GM13976 (cell line): ENCODE measurements at regions of chr4 and their contacts with region 1.

Region 1: GRCh38 chr4:52983563-52984303 is 121.6 kb downstream of the RASL11B start:
- DNase-seq: peak; percentile 57
- CTCF ChIP-seq: peak; percentile 20

Region 2: DNA sequence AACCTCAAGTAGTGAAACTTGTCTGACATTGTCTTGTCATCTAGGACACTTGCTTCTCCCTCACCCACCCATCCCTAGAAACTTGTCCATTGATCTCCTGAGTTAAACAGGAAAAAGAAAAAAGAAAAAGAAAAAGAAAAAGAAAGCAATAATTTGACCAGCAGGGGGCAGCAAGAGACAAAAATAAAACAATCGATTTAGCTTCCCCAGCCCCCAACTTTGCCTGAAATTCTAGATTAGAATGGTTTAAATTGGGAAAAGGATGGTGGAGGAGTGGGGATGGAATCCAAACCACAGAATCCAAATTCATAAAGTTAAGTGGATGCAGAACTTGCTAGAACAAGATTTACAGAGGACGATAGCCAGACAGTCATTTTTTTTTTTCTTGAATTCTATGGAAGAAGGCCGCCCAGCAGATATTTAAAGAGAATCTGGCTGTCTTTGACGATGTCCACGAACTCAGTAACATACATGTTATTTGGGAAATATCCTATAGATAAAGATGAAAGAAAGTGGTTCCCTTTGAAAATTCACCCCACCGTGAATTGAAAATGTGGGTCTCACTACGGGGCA is 607.5 kb before region 1 on chr4:
- in situ Hi-C with region 1: loop called (anchors 10 kb)
- DNase-seq: peak; percentile 34
- CTCF ChIP-seq: peak; percentile 12

Region 3: DNA sequence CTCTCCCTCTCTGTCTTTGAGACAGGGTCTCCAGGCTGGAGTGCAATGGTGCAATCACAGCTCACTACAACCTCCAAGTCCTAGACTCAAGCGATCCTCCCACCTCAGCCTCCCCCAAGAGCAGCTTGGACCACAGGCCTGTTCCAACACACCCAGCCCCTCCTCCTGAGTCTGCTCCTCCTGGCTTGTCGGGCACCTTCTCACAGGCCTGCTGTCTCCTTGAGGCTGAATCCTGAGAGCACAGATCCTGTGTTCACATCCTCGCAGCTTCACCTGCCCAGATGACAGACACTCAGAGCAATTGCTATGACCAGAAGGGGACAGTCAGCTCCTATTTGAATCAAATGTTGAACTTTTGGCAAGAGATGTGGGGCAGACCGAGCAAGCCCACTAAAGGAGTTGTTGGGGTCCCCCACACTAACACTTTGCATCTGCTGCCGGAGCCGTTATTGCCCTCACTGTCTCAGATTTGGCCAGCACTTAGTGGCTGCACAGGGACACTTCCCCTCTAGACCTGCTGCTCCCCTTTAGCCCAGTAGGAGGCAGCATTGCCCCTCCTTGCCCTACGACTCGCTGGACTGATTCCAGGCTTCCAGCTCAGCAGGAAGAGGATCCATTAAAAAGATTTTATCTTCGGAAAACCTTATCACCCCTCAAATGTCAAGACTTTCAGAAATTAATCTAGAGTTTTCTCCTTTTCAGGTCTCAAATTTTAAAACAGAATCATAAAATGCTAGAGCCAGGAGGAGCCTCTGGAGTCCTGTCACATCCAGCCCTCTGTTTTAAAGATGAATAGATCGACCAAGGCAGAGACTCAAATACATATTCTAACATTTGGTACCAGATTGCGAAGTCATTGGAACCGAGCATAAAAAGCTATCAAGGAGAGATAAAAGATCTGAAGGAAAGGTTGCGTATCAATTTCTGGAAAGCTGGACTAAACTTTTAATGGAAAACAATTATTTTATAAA is 438.3 kb before region 1 on chr4:
- in situ Hi-C with region 1: loop called (anchors 10 kb)
- DNase-seq: peak; percentile 72
- CTCF ChIP-seq: peak; percentile 92

Region 4: DNA sequence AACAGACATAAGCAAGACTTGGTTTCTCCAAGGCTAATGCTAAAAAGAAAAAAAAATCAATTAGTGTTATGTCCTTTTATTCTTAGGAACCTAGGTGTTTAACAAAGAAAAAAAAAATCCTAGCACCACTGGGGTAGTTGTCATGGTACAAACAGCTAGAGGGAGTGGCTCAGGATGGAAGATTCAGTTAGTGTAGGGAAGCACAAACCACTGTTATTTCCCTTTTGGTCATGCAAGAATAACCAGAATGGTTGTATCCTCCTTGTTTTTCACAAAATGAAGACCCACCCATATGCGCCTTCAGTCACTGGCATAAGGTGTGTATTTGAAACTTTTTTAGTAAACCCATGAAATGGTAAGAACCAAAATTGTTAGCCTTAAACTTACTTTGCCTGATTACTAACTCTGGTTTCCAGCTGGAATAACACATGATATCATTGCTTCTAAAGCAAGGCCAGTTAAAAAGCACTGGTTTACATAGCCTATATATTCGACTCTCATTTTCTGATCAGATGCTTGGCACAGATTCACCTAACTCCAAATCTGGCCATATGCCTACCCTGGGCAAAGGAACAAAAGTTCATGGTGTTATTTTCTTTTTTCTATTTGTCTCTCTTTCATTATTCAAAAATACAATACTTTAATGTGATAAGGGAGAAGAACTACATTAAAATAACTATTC is 249.5 kb after region 1 on chr4:
- in situ Hi-C with region 1: no loop called
- DNase-seq: no peak
- CTCF ChIP-seq: no peak